ENCODE measurements at regions of chr12 and their contacts with region 1.

Region 1: GRCh38 chr12:132506328-132507160 is 16.6 kb downstream of the FBRSL1 start:
- DNase-seq: peak; percentile 93

Region 2: DNA sequence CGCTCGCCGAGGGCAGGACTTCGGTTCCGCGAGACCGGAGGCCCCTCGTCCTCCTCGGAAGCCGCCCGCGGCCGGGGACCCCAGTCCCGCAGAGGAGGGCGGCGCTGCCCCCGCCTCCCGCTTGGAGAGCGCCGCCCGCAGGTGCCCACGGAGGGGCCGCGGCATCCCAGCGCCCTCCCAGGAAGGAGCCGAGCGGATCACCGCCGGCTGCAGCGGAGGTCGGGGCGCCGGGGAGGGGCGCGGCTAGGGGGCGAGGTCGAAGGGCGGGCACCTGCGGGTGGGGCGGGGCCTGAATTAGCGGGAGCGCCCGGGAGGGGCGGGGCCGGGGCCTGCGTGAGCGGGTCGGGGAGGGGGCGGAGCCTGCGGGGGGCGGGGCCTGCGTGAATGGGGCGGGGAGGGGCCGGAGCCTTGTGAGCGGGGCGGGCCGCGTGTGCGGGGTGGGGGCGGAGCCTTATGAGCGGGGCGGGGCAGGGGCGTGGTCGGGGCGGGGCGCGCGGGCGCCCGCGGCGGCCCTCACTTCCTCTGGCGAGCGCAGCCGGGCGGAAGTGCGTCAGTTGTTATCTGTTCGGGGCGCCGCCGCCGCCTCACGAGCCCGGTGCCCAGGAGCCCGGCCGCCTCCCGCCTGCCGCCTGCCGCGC is 16.8 kb before region 1 on chr12 and contains the start of gene FBRSL1:
- intact Hi-C with region 1: loop called (anchors 2 kb)
- DNase-seq: peak; percentile 97
- total RNA-seq, gene FBRSL1: 60.4 TPM

Region 3: GRCh38 chr12:132761032-132761920 is 254.7 kb after region 1 on chr12 and contains the start of gene ANKLE2:
- intact Hi-C with region 1: no loop called
- DNase-seq: no peak
- total RNA-seq, gene ANKLE2: 31.4 TPM

Measured in cardiac septum (tissue), 1 donor.